Spleen (tissue), 13 donors: ENCODE measurements at regions of chr3 and their contacts with region 1.

Region 1: DNA sequence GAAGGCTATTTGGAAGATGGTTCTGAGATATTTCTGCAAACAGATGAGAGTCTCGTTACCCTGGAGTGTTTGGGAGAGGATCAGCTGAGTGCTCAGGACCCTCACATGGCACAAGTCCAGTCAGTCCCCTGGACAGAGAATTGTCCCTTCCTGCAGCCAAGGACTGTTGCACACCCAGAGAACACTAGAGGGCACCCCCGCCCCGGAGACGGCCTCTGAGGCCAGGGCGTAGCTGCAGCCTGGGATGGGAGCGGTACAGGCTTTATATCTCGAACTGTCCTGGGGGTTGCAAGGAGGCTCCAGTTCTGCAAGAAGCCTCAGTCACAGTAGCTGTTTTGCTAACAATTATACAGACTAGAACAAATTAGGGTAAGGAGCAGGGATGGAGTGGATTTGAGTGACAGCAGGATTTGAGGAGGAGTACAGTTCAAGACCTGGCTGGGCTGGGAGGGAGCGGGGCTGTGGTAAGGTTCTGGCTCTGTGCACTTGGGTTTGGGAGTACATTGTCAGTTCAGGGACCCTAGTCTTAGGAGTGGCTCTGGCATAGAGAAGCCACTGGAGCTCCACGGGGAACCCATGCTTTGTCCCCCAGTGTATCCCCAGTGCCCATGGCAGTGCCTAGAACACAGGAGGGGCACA is 67.6 kb upstream of the HACD2 start:
- DNase-seq: peak; percentile 87
- H3K4me3 ChIP-seq: no peak overlapping the region
- H3K27ac ChIP-seq: peak overlapping the region in 7 of 8 donors; percentile 40 to 70 (median 62)
- H3K4me1 ChIP-seq: peaks cover 6 to 35% (median 22%) of the 10 kb centered on the region in 6 donors
- H3K27me3 ChIP-seq: no peaks in the 10 kb centered on the region
- CTCF ChIP-seq: peak; percentile 36 to 84 (median 74)
- POLR2A ChIP-seq: no peak

Region 2: GRCh38 chr3:123719862-123720453 is 67.5 kb after region 1 on chr3:
- intact Hi-C with region 1: loop called (anchors 5 kb)
- DNase-seq: no peak
- H3K4me3 ChIP-seq: no peak overlapping the region
- H3K27ac ChIP-seq: peak overlapping the region in 5 of 8 donors; percentile 48 to 53 (median 51)
- H3K4me1 ChIP-seq: peaks cover 0 to 25% (median 7%) of the 10 kb centered on the region in 6 donors
- H3K27me3 ChIP-seq: no peaks in the 10 kb centered on the region
- CTCF ChIP-seq: no peak
- POLR2A ChIP-seq: no peak

Region 3: GRCh38 chr3:123791898-123792297 is 139.4 kb after region 1 on chr3:
- intact Hi-C with region 1: no loop called
- DNase-seq: no peak
- H3K4me3 ChIP-seq: no peak overlapping the region
- H3K27ac ChIP-seq: no peak overlapping the region
- H3K4me1 ChIP-seq: no peaks in the 10 kb centered on the region
- H3K27me3 ChIP-seq: peaks cover 0 to 4% (median 0%) of the 10 kb centered on the region in 7 donors
- CTCF ChIP-seq: no peak
- POLR2A ChIP-seq: no peak